ENCODE measurements at regions of chrX and their contacts with region 1.

Region 1: DNA sequence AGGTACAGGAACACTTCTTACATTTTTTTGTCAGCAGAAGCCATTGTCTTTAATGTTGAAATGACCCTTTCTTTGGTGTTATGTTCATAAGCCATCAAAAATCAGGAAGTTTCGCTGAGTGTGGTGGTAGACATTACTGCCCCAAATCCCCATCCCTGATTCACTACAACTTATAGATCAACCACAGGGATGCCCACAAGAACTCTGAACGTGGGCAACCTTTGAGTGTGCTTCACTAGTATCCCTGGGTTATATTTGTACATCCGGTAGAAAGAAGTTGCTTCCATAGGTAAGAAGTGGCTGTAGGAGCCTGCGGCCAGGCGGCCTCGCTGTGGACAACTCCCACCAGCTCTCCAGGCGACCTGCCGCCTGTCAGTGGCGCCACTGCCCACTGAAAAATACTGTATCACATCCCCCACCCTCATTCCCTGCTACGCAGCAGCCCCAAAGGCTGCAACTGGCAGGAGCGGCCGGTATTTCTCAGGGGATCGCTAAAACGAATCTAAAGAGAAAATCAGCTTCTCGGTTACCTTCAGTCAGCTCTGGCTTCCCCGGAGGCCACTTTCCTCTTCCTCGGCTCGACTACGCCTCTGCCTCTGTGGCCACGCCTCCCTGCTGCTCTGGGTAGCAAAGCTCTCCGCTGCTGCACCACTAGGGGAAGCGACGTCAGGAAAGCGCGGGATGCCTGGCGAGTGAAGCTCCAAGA is 13.9 kb upstream of the ETDC start:
- DNase-seq: peak; percentile 63
- CTCF ChIP-seq: peak; percentile 9

Region 2: GRCh38 chrX:135170877-135171519 is 124.4 kb before region 1 on chrX and contains the start of gene CT55:
- in situ Hi-C with region 1: loop called (anchors 25 kb)
- DNase-seq: no peak
- CTCF ChIP-seq: no peak

Region 3: GRCh38 chrX:135547767-135548166 is 252.4 kb after region 1 on chrX:
- in situ Hi-C with region 1: no loop called
- DNase-seq: no peak
- CTCF ChIP-seq: no peak

Region 4: DNA sequence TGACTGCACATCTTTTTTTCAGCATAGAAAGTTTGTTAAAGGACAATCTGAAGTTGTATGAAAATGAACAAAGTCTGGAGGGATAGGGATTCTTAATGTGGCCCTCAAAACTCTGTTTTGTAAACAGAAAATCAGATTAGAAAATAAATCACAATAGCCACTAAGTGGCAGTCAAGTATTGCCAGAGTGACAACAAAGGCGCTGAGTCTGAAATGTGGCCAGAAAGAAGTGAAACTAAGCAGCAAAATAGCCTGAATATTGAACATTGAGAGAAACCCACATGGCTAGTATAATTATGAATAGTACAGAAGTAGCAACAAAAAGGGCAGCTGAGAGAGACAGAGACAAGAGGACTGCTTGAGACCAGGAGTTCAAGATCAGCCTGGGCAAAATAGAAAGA is 337.0 kb after region 1 on chrX:
- in situ Hi-C with region 1: no loop called
- DNase-seq: peak; percentile 26
- CTCF ChIP-seq: peak; percentile 33

Region 5: GRCh38 chrX:136112778-136113177 is 817.4 kb after region 1 on chrX:
- in situ Hi-C with region 1: no loop called
- DNase-seq: no peak
- CTCF ChIP-seq: no peak